HEK293T (cell line): ENCODE measurements at regions of chr9 and their contacts with region 1.

Region 1: DNA sequence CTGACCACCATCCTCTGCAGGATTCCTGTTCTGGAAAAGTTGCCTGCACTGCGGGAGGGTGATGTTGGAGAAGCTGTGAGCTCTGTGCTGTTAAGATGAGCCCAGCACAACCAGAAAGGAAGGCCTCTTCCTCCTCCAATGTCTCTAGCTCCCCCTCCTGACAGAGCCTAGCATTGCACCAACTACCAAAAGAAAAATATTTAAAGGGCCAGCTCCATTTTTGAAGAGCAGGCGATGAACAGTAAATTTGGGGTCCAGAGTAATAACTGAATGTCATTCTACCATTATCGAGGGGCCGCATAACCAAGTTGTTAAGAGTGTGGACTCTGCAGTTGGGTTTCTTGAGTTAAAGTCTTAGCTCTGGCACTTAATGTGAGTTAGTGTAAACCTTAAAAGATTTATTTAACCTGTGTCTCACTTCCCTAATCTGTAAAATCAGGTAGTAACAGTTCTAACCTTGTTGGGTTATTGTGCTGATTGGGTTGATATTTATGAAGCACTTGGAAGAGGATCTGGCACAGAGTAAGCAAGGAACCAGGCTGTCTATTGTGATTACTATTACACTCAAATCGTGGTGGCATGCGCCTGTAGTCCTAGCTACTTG is 3.9 kb downstream of the TEX53 start:
- DNase-seq: peak; percentile 81

Region 2: DNA sequence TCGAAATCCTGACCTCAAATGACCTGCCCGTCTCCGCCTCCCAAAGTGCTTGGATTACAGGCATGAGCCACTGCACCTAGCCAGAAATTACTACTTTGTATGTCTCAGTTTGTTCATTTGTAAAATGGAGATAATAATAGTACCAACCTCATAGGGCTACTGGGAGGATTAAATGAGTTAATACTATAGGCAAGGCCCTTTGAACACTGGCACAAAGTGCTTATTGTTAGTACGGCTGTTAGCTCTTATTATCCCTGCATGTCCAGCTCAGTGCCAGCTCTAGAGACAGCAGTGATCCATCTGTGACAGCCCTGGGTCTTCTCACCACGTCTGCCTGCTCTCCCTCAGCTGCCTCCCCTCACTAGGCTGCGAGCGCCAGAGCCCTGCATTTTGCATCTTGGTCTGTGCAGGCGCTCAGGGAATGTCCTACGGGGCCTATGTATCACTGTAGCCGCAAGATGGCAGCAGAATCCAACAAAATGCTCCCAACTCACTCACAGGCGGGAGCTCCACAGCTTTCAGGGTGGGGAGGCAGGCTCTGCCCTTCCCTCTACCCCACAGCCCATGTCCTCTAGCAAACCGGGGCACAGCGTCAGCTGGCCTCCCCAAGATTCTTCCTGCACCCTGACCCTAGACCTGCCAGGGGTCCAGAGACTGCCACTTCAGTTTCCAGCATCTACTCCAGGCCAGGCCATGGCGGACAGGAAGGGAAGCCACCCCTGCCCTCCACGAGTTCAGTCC is 248.2 kb before region 1 on chr9:
- CTCF ChIA-PET with region 1: interaction called, 16 read pairs
- POLR2A ChIA-PET with region 1: no interaction called
- DNase-seq: peak; percentile 83

Region 3: DNA sequence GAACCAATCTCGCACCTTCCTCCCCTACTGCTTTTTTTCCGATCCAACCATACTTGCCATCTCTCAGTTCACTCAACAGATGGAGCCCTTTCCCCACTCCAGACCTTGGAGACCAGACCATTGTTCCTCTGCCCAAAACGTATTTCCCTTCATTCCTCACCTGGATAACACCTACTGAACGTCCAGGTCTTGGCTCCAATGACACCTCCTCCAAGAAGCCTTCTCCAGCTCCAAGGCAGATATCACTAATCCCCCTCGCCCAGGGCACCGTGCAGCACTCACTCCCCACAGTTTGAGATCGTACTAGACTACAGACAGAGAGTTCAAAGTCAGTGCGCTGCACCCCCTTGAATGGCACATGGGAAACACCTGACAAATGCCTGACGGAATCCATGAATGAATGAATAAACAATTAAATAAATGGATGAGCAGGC is 218.8 kb before region 1 on chr9:
- CTCF ChIA-PET with region 1: interaction called, 19 read pairs
- POLR2A ChIA-PET with region 1: no interaction called
- DNase-seq: peak; percentile 64

Region 4: DNA sequence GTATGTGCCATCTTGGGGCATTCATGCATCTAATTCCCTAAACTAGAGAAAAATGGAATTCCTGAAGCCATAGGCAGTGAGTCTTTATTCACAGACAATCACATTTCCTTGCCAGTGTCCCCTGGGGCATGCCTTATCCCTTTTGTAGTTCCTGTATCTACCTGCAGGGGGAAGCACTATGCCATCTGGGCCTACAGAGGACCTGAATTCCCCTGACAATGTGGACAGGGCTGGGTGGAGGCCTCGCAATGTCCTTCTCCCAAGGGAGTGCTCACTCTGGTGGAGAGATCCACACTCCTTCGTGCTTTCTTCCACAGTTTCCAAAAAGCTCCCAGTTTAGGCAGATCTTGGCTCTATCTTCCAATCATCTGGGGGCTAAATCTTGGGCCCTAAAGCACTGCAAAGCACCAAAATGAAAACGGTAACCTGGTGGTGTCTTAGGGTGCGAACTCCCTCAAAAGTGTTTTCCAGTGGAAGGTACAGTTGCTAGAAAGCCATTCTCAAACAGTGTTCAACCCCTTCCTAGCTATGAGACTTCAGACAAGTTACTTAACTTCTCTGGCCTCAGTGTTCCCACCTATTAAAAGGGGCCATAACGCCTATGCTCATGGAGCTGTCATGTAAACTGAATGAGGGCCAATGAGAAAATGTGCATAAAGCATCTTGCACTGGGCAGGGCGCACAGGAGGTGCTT is 165.9 kb before region 1 on chr9:
- CTCF ChIA-PET with region 1: interaction called, 14 read pairs
- POLR2A ChIA-PET with region 1: no interaction called
- DNase-seq: peak; percentile 83

Region 5: GRCh38 chr9:114674798-114675540 is 21.3 kb after region 1 on chr9:
- CTCF ChIA-PET with region 1: no interaction called
- POLR2A ChIA-PET with region 1: no interaction called
- DNase-seq: no peak

Region 6: GRCh38 chr9:115046824-115047223 is 393.2 kb after region 1 on chr9:
- CTCF ChIA-PET with region 1: no interaction called
- POLR2A ChIA-PET with region 1: no interaction called
- DNase-seq: no peak